Activated CD4-positive, alpha-beta T cell treated with anti-CD3 and anti-CD28 coated beads for 36 hours (primary cell): ENCODE measurements at regions of chr22 and their contacts with region 1.

Region 1: DNA sequence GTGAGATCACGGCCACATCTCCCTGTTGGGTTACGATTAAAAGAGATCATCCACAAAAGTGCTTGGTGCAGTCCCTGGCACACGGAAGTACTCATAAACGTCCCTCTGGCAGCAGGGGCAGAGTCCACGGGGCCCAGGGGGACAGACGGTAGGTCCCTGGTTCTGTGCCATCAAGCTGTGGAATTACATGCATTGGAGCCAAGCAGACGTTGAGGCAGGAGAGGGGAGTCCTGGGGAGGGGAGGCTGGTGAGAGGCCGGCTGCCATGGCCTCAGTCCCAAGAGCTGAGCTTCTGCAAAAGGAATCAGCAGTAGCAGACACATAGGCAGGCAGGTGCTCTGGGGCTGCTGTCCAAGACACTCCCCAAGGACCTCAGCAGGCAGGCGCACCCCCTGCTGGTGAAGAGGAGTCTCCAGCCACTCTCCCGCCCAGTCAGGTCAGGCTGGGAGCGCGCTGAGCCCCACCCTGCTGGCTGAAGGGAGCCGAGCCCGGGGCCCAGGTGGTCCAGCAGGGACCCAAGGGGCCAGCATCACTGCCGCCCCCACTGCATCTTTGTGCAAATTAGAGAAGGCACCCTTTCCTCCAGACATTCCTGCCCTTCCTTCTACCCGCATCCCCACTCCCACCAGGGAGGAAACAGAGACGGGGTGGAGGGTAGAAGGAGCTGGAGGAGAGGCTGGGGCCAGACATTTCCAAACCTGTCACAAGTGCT is 7.6 kb upstream of the KCTD17 start:
- DNase-seq: peak; percentile 76
- ATAC-seq: peak; percentile 63
- H3K4me3 Mint-ChIP-seq: no peak overlapping the region
- H3K27ac Mint-ChIP-seq: no peak overlapping the region
- H3K4me1 Mint-ChIP-seq: peaks cover 23% of the 10 kb centered on the region
- H3K27me3 Mint-ChIP-seq: no peaks in the 10 kb centered on the region

Region 2: GRCh38 chr22:36781656-36782627 is 262.0 kb before region 1 on chr22:
- CTCF ChIA-PET with region 1: no interaction called
- POLR2A ChIA-PET with region 1: no interaction called
- intact Hi-C with region 1: loop called (anchors 5 kb)
- DNase-seq: peak; percentile 94
- ATAC-seq: peak; percentile 99
- H3K4me3 Mint-ChIP-seq: peak overlapping the region; percentile 24
- H3K27ac Mint-ChIP-seq: peak overlapping the region; percentile 59
- H3K4me1 Mint-ChIP-seq: peaks cover 24% of the 10 kb centered on the region
- H3K27me3 Mint-ChIP-seq: no peaks in the 10 kb centered on the region

Region 3: GRCh38 chr22:36986242-36986821 is 57.7 kb before region 1 on chr22:
- CTCF ChIA-PET with region 1: interaction called, 3 read pairs
- POLR2A ChIA-PET with region 1: no interaction called
- intact Hi-C with region 1: loop called in 1 of 2 experiments (anchors 1 kb)
- DNase-seq: peak; percentile 81
- ATAC-seq: peak; percentile 83
- H3K4me3 Mint-ChIP-seq: no peak overlapping the region
- H3K27ac Mint-ChIP-seq: no peak overlapping the region
- H3K4me1 Mint-ChIP-seq: peaks cover 6% of the 10 kb centered on the region
- H3K27me3 Mint-ChIP-seq: peaks cover 24% of the 10 kb centered on the region

Region 4: GRCh38 chr22:37019309-37020125 is 24.5 kb before region 1 on chr22 and contains the starts of genes MPST and TST:
- CTCF ChIA-PET with region 1: interaction called, 27 read pairs
- POLR2A ChIA-PET with region 1: no interaction called
- intact Hi-C with region 1: no loop called
- DNase-seq: peak; percentile 60
- ATAC-seq: peak; percentile 74
- H3K4me3 Mint-ChIP-seq: peak within 1 kb of the TSS; percentile 78
- H3K27ac Mint-ChIP-seq: peak within 1 kb of the TSS; percentile 52
- H3K4me1 Mint-ChIP-seq: peaks cover 4% of the 10 kb centered on the region
- H3K27me3 Mint-ChIP-seq: peaks cover 13% of the 10 kb centered on the region
- total RNA-seq, gene MPST: 10.6 to 11.0 TPM
- total RNA-seq, gene TST: 1.8 to 2.1 TPM

Region 5: GRCh38 chr22:37077884-37078485 is 34.0 kb after region 1 on chr22:
- CTCF ChIA-PET with region 1: interaction called, 3 read pairs
- POLR2A ChIA-PET with region 1: no interaction called
- intact Hi-C with region 1: loop called in 1 of 2 experiments (anchors 2 kb)
- DNase-seq: peak; percentile 94
- ATAC-seq: peak; percentile 18
- H3K4me3 Mint-ChIP-seq: no peak overlapping the region
- H3K27ac Mint-ChIP-seq: peak overlapping the region; percentile 94
- H3K4me1 Mint-ChIP-seq: peaks cover 59% of the 10 kb centered on the region
- H3K27me3 Mint-ChIP-seq: peaks cover 10% of the 10 kb centered on the region

Region 6: GRCh38 chr22:37109242-37109917 is 65.4 kb after region 1 on chr22 and contains the start of gene TMPRSS6:
- CTCF ChIA-PET with region 1: no interaction called
- POLR2A ChIA-PET with region 1: no interaction called
- intact Hi-C with region 1: no loop called
- DNase-seq: no peak
- ATAC-seq: no peak
- H3K4me3 Mint-ChIP-seq: no peak within 1 kb of the TSS
- H3K27ac Mint-ChIP-seq: no peak within 1 kb of the TSS
- H3K4me1 Mint-ChIP-seq: peaks cover 3% of the 10 kb centered on the region
- H3K27me3 Mint-ChIP-seq: no peaks in the 10 kb centered on the region
- total RNA-seq, gene TMPRSS6: 17.6 to 20.2 TPM